H1 (cell line): ENCODE measurements at regions of chr16 and their contacts with region 1.

Region 1: DNA sequence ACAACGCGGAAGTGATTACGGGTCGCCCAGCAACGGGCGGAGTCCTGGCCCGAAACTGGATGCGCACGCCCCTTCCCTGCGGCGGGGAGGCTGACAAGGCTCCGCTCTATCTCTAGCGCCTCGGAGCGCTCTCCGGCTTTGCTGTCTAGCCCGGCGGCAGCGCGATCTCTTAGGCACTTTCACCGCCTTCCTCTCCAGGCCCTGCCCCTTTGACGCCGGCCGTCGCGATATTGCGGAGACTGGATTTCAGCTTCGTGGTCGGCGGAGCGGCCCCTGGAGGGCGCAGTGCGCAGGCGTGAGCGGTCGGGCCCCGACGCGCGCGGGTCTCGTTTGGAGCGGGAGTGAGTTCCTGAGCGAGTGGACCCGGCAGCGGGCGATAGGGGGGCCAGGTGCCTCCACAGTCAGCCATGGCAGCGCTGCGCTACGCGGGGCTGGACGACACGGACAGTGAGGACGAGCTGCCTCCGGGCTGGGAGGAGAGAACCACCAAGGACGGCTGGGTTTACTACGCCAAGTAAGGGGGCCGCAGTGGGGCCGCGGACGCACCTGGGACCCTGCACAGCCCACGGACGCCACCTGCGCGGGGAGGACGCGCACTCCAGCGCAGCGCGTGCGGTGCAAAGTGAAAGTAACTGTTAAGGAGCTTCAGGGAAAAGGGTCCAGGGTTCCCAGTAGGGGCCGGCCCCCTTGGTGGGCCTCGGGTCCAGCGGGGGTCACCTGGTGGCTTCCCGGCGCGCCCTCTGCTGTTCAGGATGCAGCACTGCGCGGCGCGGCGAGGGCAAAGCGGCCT is at the start of gene WWOX:
- DNase-seq: peak; percentile 92 to 93
- H3K4me3 ChIP-seq: peak within 1 kb of the TSS; percentile 85 to 99 (median 90)
- H3K27ac ChIP-seq: peak within 1 kb of the TSS; percentile 6; the same call in 1 of the 2 replicates
- H3K4me1 ChIP-seq: peaks cover 0 to 3% (median 0%) of the 10 kb centered on the region in 4 experiments; a peak in 2 of 7 replicates
- H3K27me3 ChIP-seq: peaks cover 0 to 11% (median 2%) of the 10 kb centered on the region in 4 experiments; a peak in 3 of 7 replicates
- CTCF ChIP-seq: peak; percentile 75 to 91 (median 85)
- EP300 ChIP-seq: 0 out of 3 replicates have a peak, but pooled peaks of 1 of the 2 experiments have one; percentile 50
- POLR2A ChIP-seq: peak in 1 of 2 experiments; percentile 19; a peak in 1 of 3 replicates
- RAD21 ChIP-seq: peak; percentile 37 to 61; a peak in 3 of 4 replicates
- total RNA-seq, gene WWOX: 16.7 and 17.2 TPM in 2 replicates

Region 2: DNA sequence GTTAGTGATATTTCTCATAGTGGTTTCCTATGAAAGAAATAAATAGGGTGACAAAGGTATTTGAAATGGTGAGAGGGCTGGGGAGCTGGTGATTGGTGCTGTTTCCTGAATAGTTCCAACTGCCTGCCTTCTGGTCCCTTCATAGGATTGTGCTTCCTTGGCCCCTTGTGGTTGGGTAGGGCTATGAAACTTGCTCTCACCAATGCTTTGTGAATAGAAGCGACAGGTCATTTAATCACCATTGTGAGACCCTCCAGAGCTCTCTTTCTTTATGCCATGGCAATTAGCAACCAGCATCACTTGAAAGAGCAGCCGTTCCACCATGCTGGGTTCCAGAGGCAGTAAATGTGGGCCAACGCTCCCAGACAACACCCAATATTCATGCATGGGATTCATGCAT is 23.8 kb before region 1 on chr16:
- CTCF ChIA-PET with region 1: interaction called, 15 read pairs
- POLR2A ChIA-PET with region 1: no interaction called
- DNase-seq: no peak
- H3K4me3 ChIP-seq: no peak overlapping the region
- H3K27ac ChIP-seq: no peak overlapping the region
- H3K4me1 ChIP-seq: peaks cover 0 to 7% (median 4%) of the 10 kb centered on the region in 4 experiments; a peak in 3 of 7 replicates
- H3K27me3 ChIP-seq: peaks cover 47 to 89% (median 78%) of the 10 kb centered on the region in 4 experiments
- CTCF ChIP-seq: peak in 1 of 3 experiments; percentile 29; a peak in 1 of 4 replicates
- EP300 ChIP-seq: no peak
- POLR2A ChIP-seq: no peak
- RAD21 ChIP-seq: 0 out of 4 replicates have a peak, but pooled peaks of 1 of the 2 experiments have one; percentile 7

Region 3: GRCh38 chr16:78116946-78117345 is 17.4 kb after region 1 on chr16:
- CTCF ChIA-PET with region 1: interaction called, 14 read pairs
- POLR2A ChIA-PET with region 1: no interaction called
- DNase-seq: no peak
- H3K4me3 ChIP-seq: no peak overlapping the region
- H3K27ac ChIP-seq: no peak overlapping the region
- H3K4me1 ChIP-seq: no peaks in the 10 kb centered on the region
- H3K27me3 ChIP-seq: no peaks in the 10 kb centered on the region
- CTCF ChIP-seq: no peak
- EP300 ChIP-seq: no peak
- POLR2A ChIP-seq: no peak
- RAD21 ChIP-seq: no peak

Region 4: GRCh38 chr16:78122774-78123315 is 23.3 kb after region 1 on chr16:
- CTCF ChIA-PET with region 1: interaction called, 14 read pairs
- POLR2A ChIA-PET with region 1: no interaction called
- DNase-seq: no peak
- H3K4me3 ChIP-seq: no peak overlapping the region
- H3K27ac ChIP-seq: no peak overlapping the region
- H3K4me1 ChIP-seq: peaks cover 0 to 3% (median 0%) of the 10 kb centered on the region in 4 experiments; a peak in 1 of 7 replicates
- H3K27me3 ChIP-seq: no peaks in the 10 kb centered on the region
- CTCF ChIP-seq: peak in 1 of 3 experiments; percentile 5; a peak in 1 of 4 replicates
- EP300 ChIP-seq: no peak
- POLR2A ChIP-seq: no peak
- RAD21 ChIP-seq: peak in 1 of 2 experiments; percentile 58